ENCODE measurements at regions of chr16 and their contacts with region 1.

Region 1: GRCh38 chr16:22353191-22353919 is 21.1 kb downstream of the CDR2 start:
- DNase-seq: peak; percentile 66
- ATAC-seq: peak; percentile 62
- H3K4me3 ChIP-seq: peak overlapping the region in 1 of 3 experiments; percentile 6; a peak in 1 of 6 replicates
- H3K27ac ChIP-seq: peak overlapping the region; percentile 57
- H3K4me1 ChIP-seq: peaks cover 41% of the 10 kb centered on the region
- H3K27me3 ChIP-seq: no peaks in the 10 kb centered on the region
- CTCF ChIP-seq: no peak
- EP300 ChIP-seq: no peak
- POLR2A ChIP-seq: no peak
- RAD21 ChIP-seq: no peak

Region 2: DNA sequence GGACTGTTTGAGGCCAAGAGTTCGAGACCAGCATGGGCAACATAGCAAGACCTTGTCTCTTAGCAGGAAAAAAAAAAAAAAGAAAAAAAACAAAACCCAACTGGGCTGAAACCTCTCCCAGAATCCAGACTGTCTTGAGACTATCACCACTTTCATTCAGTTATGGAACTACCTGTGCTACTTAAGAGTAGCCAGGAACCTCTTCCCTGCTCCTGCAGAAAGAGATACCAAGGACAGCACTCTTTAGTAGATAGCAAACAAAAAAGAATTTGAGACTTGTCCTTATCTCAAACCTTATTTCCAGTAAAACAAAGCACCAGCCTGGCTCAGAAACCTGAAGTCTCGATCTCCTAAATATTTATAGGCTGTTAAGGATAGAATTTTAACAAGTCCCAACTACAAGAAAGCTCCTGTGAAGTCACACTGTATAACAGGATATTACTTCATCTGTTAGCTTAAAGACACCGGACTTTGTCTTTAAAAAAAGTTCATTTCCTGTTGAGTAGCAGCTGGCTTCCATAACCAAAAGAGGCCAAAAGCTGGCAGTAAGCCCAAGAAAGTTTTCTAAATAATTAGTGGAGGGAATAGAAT is 16.0 kb after region 1 on chr16:
- CTCF ChIA-PET with region 1: no interaction called
- POLR2A ChIA-PET with region 1: interaction called, 27 read pairs
- in situ Hi-C with region 1: no loop called
- intact Hi-C with region 1: loop called (anchors 2 kb)
- DNase-seq: peak; percentile 78
- ATAC-seq: no peak
- H3K4me3 ChIP-seq: peak overlapping the region in 2 of 3 experiments; percentile 3 to 30; a peak in 3 of 6 replicates
- H3K27ac ChIP-seq: peak overlapping the region; percentile 85
- H3K4me1 ChIP-seq: peaks cover 72% of the 10 kb centered on the region
- H3K27me3 ChIP-seq: no peaks in the 10 kb centered on the region; a peak in 1 of 5 replicates
- CTCF ChIP-seq: no peak
- EP300 ChIP-seq: peak in 1 of 2 experiments; percentile 63; a peak in 1 of 4 replicates
- POLR2A ChIP-seq: peak in 1 of 2 experiments; percentile 18; a peak in 1 of 4 replicates
- RAD21 ChIP-seq: no peak

Measured in HepG2 (cell line).